CD8-positive, alpha-beta T cell (primary cell): ENCODE measurements at regions of chr19 and their contacts with region 1.

Region 1: DNA sequence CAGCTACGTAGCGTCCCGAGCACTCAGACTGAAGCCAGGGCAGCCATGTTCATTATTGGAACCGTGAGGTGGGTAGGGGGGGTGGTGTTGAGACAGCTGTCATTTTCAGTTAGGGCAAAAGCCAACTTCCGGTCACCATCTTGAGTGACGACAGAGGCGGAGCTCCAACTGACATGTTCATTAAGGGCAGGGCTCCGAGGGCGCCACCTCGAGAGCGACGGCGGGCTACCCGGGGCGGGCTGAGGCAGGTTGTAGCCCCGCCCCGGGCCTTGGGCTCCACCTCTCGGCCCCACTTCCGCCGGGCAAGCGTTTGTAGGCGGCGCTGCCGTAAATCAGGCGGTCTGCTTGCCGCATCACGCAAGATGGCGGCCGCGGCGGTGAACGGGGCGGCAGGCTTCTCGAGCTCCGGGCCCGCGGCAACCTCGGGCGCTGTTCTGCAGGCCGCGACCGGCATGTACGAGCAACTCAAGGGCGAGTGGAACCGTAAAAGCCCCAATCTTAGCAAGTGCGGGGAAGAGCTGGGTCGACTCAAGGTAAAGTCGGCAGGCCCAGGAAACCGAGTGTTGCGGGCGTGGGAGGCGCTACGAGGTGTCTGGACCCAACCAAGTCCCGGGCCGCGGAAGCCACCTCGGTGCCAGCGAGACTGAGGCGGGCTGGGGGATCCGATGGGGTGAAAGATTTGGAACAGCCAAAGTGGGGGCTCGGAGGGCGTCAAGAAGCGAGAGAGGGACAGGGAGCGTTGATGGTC is at the start of gene PSMD8:
- DNase-seq: peak; percentile 95 to 100 (median 98)
- ATAC-seq: peak; percentile 97
- H3K4me3 ChIP-seq: peak within 1 kb of the TSS; percentile 71 to 84
- H3K4me3 Mint-ChIP-seq: peak within 1 kb of the TSS; percentile 99
- H3K27ac ChIP-seq: peak within 1 kb of the TSS; percentile 83 to 89
- H3K27ac Mint-ChIP-seq: peak within 1 kb of the TSS; percentile 96
- H3K4me1 ChIP-seq: peaks cover 19% of the 10 kb centered on the region
- H3K4me1 Mint-ChIP-seq: peaks cover 29% of the 10 kb centered on the region
- H3K27me3 ChIP-seq: no peaks in the 10 kb centered on the region
- H3K27me3 Mint-ChIP-seq: peaks cover 3% of the 10 kb centered on the region
- CTCF ChIP-seq: no peak
- total RNA-seq, gene PSMD8: 71.5 to 75.1 TPM

Region 2: DNA sequence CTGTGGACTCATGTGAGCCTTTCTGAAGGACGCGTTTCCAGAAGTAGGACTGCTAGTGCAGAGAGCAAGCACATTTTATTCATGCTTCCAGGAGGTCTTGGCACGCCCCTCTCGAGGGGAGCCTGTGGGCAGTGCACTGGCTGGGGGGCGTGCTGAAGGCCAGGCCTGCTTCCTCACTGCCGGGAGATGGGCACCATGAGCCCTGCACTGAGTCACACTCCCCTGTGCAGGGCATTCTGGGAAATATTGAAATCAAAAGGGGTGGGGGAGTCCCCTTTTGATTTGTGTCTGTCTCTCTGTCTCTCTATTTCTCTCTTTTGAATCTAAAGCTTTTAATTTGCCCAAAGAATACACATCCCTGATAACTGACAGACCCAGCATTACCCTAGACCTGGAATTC is 184.5 kb before region 1 on chr19:
- CTCF ChIA-PET with region 1: no interaction called
- POLR2A ChIA-PET with region 1: no interaction called
- intact Hi-C with region 1: no loop called
- DNase-seq: no peak
- ATAC-seq: no peak
- H3K4me3 ChIP-seq: no peak overlapping the region
- H3K4me3 Mint-ChIP-seq: no peak overlapping the region
- H3K27ac ChIP-seq: no peak overlapping the region
- H3K27ac Mint-ChIP-seq: no peak overlapping the region
- H3K4me1 ChIP-seq: no peaks in the 10 kb centered on the region
- H3K4me1 Mint-ChIP-seq: peaks cover 3% of the 10 kb centered on the region
- H3K27me3 ChIP-seq: no peaks in the 10 kb centered on the region
- H3K27me3 Mint-ChIP-seq: no peaks in the 10 kb centered on the region
- CTCF ChIP-seq: no peak

Region 3: GRCh38 chr19:38263689-38264485 is 110.7 kb before region 1 on chr19:
- CTCF ChIA-PET with region 1: interaction called, 3 read pairs
- POLR2A ChIA-PET with region 1: interaction called, 3 read pairs
- intact Hi-C with region 1: loop called in 1 of 2 experiments (anchors 1 kb)
- DNase-seq: peak; percentile 42 to 86 (median 74)
- ATAC-seq: peak; percentile 92
- H3K4me3 ChIP-seq: peak overlapping the region; percentile 62 to 89
- H3K4me3 Mint-ChIP-seq: peak overlapping the region; percentile 88
- H3K27ac ChIP-seq: peak overlapping the region in 1 of 2 experiments; percentile 63
- H3K27ac Mint-ChIP-seq: peak overlapping the region; percentile 79
- H3K4me1 ChIP-seq: peaks cover 24% of the 10 kb centered on the region
- H3K4me1 Mint-ChIP-seq: peaks cover 42% of the 10 kb centered on the region
- H3K27me3 ChIP-seq: no peaks in the 10 kb centered on the region
- H3K27me3 Mint-ChIP-seq: peaks cover 2% of the 10 kb centered on the region
- CTCF ChIP-seq: no peak

Region 4: GRCh38 chr19:38361633-38362075 is 12.9 kb before region 1 on chr19:
- CTCF ChIA-PET with region 1: no interaction called
- POLR2A ChIA-PET with region 1: interaction called, 8 read pairs
- intact Hi-C with region 1: loop called in 1 of 2 experiments (anchors 1 kb)
- DNase-seq: peak; percentile 17 to 75 (median 58)
- ATAC-seq: peak; percentile 73
- H3K4me3 ChIP-seq: peak overlapping the region; percentile 50 to 77
- H3K4me3 Mint-ChIP-seq: peak overlapping the region; percentile 81
- H3K27ac ChIP-seq: no peak overlapping the region
- H3K27ac Mint-ChIP-seq: no peak overlapping the region
- H3K4me1 ChIP-seq: peaks cover 10% of the 10 kb centered on the region
- H3K4me1 Mint-ChIP-seq: peaks cover 14% of the 10 kb centered on the region
- H3K27me3 ChIP-seq: peaks cover 0 to 3% of the 10 kb centered on the region in 2 experiments
- H3K27me3 Mint-ChIP-seq: peaks cover 2% of the 10 kb centered on the region
- CTCF ChIP-seq: peak; percentile 16

Region 5: GRCh38 chr19:38394488-38394887 is 19.9 kb after region 1 on chr19:
- CTCF ChIA-PET with region 1: interaction called, 3 read pairs
- POLR2A ChIA-PET with region 1: interaction called, 11 read pairs
- intact Hi-C with region 1: no loop called
- DNase-seq: peak in 8 of 9 experiments; percentile 33 to 79 (median 66)
- ATAC-seq: peak; percentile 72
- H3K4me3 ChIP-seq: peak overlapping the region; percentile 18 to 47
- H3K4me3 Mint-ChIP-seq: peak overlapping the region; percentile 77
- H3K27ac ChIP-seq: no peak overlapping the region
- H3K27ac Mint-ChIP-seq: peak overlapping the region; percentile 52
- H3K4me1 ChIP-seq: peaks cover 15% of the 10 kb centered on the region
- H3K4me1 Mint-ChIP-seq: peaks cover 17% of the 10 kb centered on the region
- H3K27me3 ChIP-seq: no peaks in the 10 kb centered on the region
- H3K27me3 Mint-ChIP-seq: peaks cover 8% of the 10 kb centered on the region
- CTCF ChIP-seq: no peak

Region 6: GRCh38 chr19:38899447-38900219 is 525.0 kb after region 1 on chr19 and contains the starts of genes NFKBIB and SIRT2:
- CTCF ChIA-PET with region 1: no interaction called
- POLR2A ChIA-PET with region 1: no interaction called
- intact Hi-C with region 1: loop called in 1 of 2 experiments (anchors 1 kb)
- DNase-seq: peak; percentile 97 to 100 (median 99)
- ATAC-seq: peak; percentile 85
- H3K4me3 ChIP-seq: peak within 1 kb of the TSS; percentile 68 to 88
- H3K4me3 Mint-ChIP-seq: peak within 1 kb of the TSS; percentile 93
- H3K27ac ChIP-seq: peak within 1 kb of the TSS; percentile 93 to 100
- H3K27ac Mint-ChIP-seq: peak within 1 kb of the TSS; percentile 98
- H3K4me1 ChIP-seq: peaks cover 23% of the 10 kb centered on the region
- H3K4me1 Mint-ChIP-seq: peaks cover 57% of the 10 kb centered on the region
- H3K27me3 ChIP-seq: no peaks in the 10 kb centered on the region
- H3K27me3 Mint-ChIP-seq: no peaks in the 10 kb centered on the region
- CTCF ChIP-seq: no peak
- total RNA-seq, gene NFKBIB: 62.9 to 66.1 TPM
- total RNA-seq, gene SIRT2: 90.6 to 95.1 TPM

Region 7: DNA sequence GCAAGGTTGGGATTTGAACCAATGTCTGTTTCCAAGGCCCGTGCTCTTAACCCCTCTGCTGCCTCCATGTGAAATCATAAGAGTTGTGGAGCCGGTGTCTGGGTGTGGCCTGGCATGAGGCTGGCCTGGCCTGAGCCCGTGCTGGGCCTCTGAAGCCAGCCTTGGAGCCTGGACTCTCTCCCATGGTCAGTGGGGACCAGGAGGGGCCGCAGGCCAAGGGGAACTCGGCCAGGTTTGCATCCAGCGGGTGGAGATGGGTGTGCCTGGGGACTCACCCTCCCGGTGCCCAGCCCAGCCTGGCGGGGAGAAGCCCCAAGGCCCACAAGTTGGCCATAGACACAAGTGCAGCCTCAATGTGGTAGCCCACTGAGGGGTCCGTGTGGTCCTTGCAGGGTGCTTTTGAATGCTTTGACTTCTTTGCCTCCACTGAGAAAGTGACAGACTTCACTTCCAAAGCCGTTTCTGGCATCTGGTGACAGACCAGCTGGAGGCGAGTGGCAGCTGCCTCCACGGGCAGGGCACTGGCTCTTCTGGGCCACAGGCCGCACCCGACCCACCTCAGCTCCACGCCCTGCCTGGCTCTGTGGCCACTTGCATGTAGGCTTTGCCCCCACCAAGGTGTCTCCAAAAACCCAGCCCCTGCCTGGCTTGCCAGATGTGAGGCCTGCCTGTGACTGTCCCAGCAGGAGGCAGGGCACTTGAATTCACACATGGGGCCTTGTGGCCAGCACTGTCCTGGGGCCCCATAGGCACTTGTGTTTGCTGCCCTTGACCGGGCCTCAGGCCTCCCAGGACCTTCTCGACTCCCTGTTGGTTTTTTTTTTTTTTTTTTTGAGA is 796.0 kb after region 1 on chr19:
- CTCF ChIA-PET with region 1: no interaction called
- POLR2A ChIA-PET with region 1: no interaction called
- intact Hi-C with region 1: no loop called
- DNase-seq: no peak
- ATAC-seq: no peak
- H3K4me3 ChIP-seq: no peak overlapping the region
- H3K4me3 Mint-ChIP-seq: no peak overlapping the region
- H3K27ac ChIP-seq: no peak overlapping the region
- H3K27ac Mint-ChIP-seq: no peak overlapping the region
- H3K4me1 ChIP-seq: no peaks in the 10 kb centered on the region
- H3K4me1 Mint-ChIP-seq: no peaks in the 10 kb centered on the region
- H3K27me3 ChIP-seq: no peaks in the 10 kb centered on the region
- H3K27me3 Mint-ChIP-seq: no peaks in the 10 kb centered on the region
- CTCF ChIP-seq: no peak